ENCODE measurements at regions of chr2 and their contacts with region 1.

Region 1: GRCh38 chr2:190679813-190680591 is 31.1 kb downstream of the NAB1 start:
- DNase-seq: peak; percentile 49
- CTCF ChIP-seq: peak; percentile 84

Region 2: GRCh38 chr2:190636373-190636772 is 43.6 kb before region 1 on chr2:
- CTCF ChIA-PET with region 1: interaction called, 23 read pairs
- POLR2A ChIA-PET with region 1: no interaction called
- DNase-seq: no peak
- CTCF ChIP-seq: no peak

Region 3: GRCh38 chr2:190664240-190664639 is 15.8 kb before region 1 on chr2:
- CTCF ChIA-PET with region 1: interaction called, 76 read pairs
- POLR2A ChIA-PET with region 1: interaction called, 3 read pairs
- DNase-seq: no peak
- CTCF ChIP-seq: no peak

Region 4: DNA sequence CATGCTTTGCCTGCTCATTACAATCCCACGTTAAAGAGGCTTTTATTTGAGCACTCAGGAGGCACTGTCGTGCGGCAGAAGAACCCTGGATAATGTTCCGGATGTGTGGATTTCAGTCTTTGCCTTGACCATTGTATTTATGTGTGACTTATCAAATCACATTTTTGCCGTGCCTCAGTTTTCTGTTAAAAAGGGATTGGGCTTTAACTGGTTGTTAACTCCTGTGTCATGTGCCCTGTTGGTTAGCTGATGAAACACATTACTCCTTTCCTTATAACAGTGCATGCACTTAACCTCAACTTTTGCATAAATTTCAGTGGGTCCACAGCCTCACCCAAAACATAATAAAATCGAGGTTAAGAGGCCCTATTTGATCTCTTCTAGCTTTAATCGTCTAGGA is 21.6 kb after region 1 on chr2:
- CTCF ChIA-PET with region 1: interaction called, 26 read pairs
- POLR2A ChIA-PET with region 1: interaction called, 4 read pairs
- DNase-seq: no peak
- CTCF ChIP-seq: no peak